PC-3 (cell line): ENCODE measurements at regions of chr15 and their contacts with region 1.

Region 1: GRCh38 chr15:100873029-100873677 is 6.5 kb upstream of the ALDH1A3 start:
- DNase-seq: peak; percentile 96
- ATAC-seq: peak; percentile 69
- H3K4me3 ChIP-seq: no peak overlapping the region
- H3K27ac ChIP-seq: peak overlapping the region; percentile 54
- H3K4me1 ChIP-seq: peaks cover 18% of the 10 kb centered on the region
- H3K27me3 ChIP-seq: no peaks in the 10 kb centered on the region
- CTCF ChIP-seq: peak; percentile 81

Region 2: DNA sequence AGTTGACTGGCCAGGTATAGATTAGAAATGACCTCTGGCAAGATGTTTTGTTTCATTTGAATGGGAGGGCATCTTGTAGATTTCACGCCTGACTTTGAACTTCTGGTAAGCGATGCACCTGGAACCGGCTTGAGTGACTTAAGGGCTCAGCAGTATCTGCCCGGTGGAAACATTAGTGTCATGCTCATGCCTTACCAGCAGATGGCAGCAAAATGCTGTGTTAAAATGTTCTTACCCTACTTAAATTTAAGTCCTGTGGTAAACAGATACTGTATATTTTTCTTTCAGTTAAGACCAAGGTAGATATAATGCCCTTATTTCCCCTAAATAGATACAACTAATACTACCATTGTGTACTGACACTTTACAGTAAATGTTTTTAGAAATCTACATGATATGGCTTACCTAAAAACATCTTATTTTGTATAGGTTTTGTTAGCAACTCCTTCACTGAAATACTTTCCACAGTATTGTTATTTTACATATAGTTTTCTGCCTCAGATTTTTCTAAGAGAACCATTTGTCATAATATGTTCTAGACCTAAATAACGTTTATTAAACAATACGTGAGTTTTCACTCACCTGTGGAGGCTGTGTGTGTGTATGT is 245.3 kb before region 1 on chr15:
- CTCF ChIA-PET with region 1: no interaction called
- POLR2A ChIA-PET with region 1: no interaction called
- intact Hi-C with region 1: loop called (anchors 2 kb)
- DNase-seq: peak; percentile 93
- ATAC-seq: peak; percentile 79
- H3K4me3 ChIP-seq: no peak overlapping the region
- H3K27ac ChIP-seq: peak overlapping the region; percentile 85
- H3K4me1 ChIP-seq: peaks cover 30% of the 10 kb centered on the region
- H3K27me3 ChIP-seq: no peaks in the 10 kb centered on the region
- CTCF ChIP-seq: peak; percentile 83

Region 3: DNA sequence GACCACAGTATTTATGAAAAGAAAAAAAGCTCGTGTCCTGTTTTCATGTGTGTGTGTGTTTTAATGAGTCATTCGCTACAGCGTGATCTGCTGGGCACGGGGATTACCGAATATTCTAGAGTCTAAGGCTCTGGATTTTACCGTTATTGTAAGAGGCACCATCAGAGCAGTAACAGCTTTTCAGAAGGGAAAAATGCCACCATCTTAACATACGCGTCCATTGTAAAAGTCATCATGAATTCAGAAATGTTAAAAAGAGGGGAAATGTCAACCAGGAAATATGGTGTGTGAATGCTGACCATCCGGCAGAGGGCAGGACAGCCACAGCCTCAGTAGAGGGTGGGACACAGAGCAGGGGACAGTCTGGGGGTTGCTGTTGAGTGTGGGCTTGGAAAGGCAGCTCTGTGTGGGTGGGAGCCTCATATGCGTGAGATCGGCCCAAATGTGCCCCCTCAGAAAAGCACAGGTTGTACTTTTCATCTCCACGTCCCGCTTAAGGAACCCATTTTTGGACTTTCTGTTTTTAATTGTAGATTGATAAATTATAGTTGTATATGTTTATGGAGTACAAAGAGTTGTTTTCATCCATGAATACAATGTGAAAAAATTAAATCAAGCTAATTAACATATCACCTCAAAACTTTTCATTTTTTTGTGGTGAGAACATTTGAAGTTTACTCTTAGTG is 201.2 kb before region 1 on chr15:
- CTCF ChIA-PET with region 1: interaction called, 3 read pairs
- POLR2A ChIA-PET with region 1: no interaction called
- intact Hi-C with region 1: loop called (anchors 2 kb)
- DNase-seq: peak; percentile 47
- ATAC-seq: peak; percentile 84
- H3K4me3 ChIP-seq: no peak overlapping the region
- H3K27ac ChIP-seq: peak overlapping the region; percentile 60
- H3K4me1 ChIP-seq: peaks cover 23% of the 10 kb centered on the region
- H3K27me3 ChIP-seq: no peaks in the 10 kb centered on the region
- CTCF ChIP-seq: peak; percentile 66